ENCODE measurements at regions of chr6 and their contacts with region 1.

Region 1: DNA sequence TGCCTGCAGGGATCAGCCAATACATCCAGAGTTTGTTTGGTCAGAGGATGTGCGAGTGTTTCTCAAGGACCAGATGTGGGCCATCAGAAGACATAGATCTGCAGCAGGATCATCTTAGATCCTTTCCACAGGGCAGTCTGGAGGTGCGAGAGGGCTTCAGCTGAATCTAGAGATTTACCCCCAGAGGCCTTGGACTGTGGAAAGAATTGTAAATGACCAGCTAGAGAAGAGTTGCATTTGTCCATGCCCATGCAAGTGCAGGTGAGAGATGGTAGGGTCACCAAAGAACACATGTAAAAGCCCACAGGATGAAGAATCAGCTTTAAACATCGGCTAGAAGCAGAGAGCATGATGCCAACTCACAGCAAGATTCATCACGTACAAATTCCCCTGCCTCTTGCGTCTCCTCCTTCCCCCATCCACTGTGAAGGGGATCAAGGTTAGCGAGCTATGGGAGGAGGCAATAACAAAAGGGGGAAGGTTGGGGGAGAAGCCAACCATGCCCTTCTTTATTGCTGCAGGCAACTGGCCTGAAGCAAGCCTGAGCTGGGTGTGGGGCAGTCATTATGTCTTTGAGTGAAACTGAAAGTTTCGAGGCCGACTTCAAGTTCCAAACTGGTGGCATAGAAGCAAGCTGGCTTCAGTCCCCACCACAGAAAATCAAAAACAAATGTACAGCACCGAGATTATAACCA is 83.5 kb downstream of the SCML4 start:
- DNase-seq: peak in 7 of 9 donors; percentile 35 to 48 (median 42)
- ATAC-seq: peak; percentile 43
- H3K4me3 ChIP-seq: peak overlapping the region; percentile 48
- H3K4me3 Mint-ChIP-seq: peak overlapping the region; percentile 72 to 90 (median 82)
- H3K27ac ChIP-seq: peak overlapping the region; percentile 73
- H3K27ac Mint-ChIP-seq: peak overlapping the region; percentile 85 to 98 (median 95)
- H3K4me1 ChIP-seq: peaks cover 54 to 65% of the 10 kb centered on the region in 2 donors
- H3K4me1 Mint-ChIP-seq: peaks cover 47 to 92% (median 86%) of the 10 kb centered on the region in 7 donors
- H3K27me3 ChIP-seq: no peaks in the 10 kb centered on the region
- H3K27me3 Mint-ChIP-seq: no peaks in the 10 kb centered on the region

Region 2: DNA sequence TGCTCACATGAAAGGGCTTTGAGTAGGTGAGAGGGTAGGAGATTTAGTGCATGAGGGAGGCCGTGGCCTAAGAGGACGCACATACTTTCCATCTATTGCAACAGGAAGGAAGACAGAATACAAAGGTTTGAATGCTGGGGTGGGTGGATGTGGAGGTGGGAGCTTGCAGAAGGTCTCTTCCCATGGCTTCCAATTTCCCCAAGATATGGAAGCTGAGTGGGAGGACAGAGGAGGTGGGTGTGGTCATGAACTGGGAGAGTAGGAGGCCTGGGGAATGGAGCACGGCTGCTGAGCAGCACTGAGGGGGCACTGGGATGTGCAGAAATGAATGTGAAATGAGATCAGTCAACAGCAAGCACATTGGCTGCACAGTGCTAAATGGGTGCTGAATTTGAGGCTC is 13.1 kb after region 1 on chr6:
- CTCF ChIA-PET with region 1: interaction called, 4 read pairs
- POLR2A ChIA-PET with region 1: interaction called, 8 read pairs
- intact Hi-C with region 1: loop called (anchors 1 to 2 kb)
- DNase-seq: peak in 2 of 9 donors; percentile 6 to 12
- ATAC-seq: no peak
- H3K4me3 ChIP-seq: no peak overlapping the region
- H3K4me3 Mint-ChIP-seq: peak overlapping the region; percentile 3 to 76 (median 57)
- H3K27ac ChIP-seq: no peak overlapping the region
- H3K27ac Mint-ChIP-seq: peak overlapping the region in 8 of 9 donors; percentile 66 to 90 (median 84)
- H3K4me1 ChIP-seq: peaks cover 21 to 25% of the 10 kb centered on the region in 2 donors
- H3K4me1 Mint-ChIP-seq: peaks cover 33 to 93% (median 84%) of the 10 kb centered on the region in 7 donors
- H3K27me3 ChIP-seq: no peaks in the 10 kb centered on the region
- H3K27me3 Mint-ChIP-seq: no peaks in the 10 kb centered on the region